ENCODE measurements at regions of chr10 and their contacts with region 1.

Region 1: GRCh38 chr10:50506861-50507573 is 116.7 kb downstream of the SGMS1 start:
- DNase-seq: peak; percentile 58
- ATAC-seq: peak; percentile 80
- H3K4me3 ChIP-seq: no peak overlapping the region
- H3K27ac ChIP-seq: peak overlapping the region; percentile 35
- H3K4me1 ChIP-seq: peaks cover 78% of the 10 kb centered on the region
- H3K27me3 ChIP-seq: no peaks in the 10 kb centered on the region
- CTCF ChIP-seq: no peak
- EP300 ChIP-seq: no peak
- POLR2A ChIP-seq: no peak
- RAD21 ChIP-seq: no peak

Region 2: DNA sequence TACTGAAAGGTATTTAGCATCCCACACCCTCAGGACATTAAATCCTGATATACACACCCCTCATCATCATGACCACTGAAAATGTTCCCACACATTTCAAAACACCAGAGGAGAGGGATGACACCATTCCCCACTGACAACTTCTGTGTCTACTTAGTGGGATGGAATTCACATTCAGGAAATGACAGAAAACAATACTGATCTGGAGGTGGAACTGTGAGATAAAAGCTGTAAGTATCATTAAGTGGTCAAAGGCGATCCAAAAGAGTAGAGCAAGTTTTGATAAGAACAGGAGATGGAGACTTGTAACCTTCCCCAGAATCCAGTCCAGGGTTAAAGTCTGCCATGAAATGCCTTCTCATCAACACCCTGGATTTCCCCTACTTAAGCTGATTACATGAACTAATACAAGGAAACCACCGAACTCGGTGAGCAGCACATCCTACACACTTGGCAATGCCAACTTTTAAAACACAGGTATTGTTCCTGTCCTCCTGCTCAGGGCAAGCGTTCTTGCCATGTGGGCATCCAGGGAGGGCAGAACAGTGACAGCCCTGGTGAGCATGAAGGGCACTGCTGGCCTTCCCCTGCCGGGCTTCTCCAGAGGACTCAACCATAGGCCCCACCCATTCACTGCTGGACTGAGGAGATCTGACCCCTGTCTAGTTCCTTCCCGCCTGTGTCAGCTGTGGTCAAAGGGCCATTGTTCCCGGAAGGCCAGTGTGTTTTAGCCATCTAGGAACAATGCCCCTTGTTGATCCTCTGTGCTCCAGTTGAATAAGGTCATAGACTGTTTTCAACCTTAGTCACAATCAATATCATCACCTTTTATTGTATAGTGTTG is 31.8 kb after region 1 on chr10:
- CTCF ChIA-PET with region 1: no interaction called
- POLR2A ChIA-PET with region 1: no interaction called
- in situ Hi-C with region 1: no loop called
- intact Hi-C with region 1: loop called (anchors 2 kb)
- DNase-seq: peak; percentile 92
- ATAC-seq: peak; percentile 99
- H3K4me3 ChIP-seq: peak overlapping the region in 1 of 3 experiments; percentile 18; a peak in 1 of 6 replicates
- H3K27ac ChIP-seq: peak overlapping the region; percentile 29
- H3K4me1 ChIP-seq: peaks cover 21% of the 10 kb centered on the region
- H3K27me3 ChIP-seq: no peaks in the 10 kb centered on the region
- CTCF ChIP-seq: peak; percentile 10; the same call in 1 of the 2 replicates
- EP300 ChIP-seq: peak in 1 of 2 experiments; percentile 55; a peak in 1 of 4 replicates
- POLR2A ChIP-seq: no peak
- RAD21 ChIP-seq: no peak